ENCODE measurements at regions of chr1 and their contacts with region 1.

Region 1: GRCh38 chr1:25796811-25797458 is 3.1 kb upstream of the SELENON start:
- DNase-seq: peak; percentile 84 to 96 (median 89)
- H3K4me3 ChIP-seq: no peak overlapping the region
- H3K27ac ChIP-seq: peak overlapping the region in 1 of 5 donors; percentile 20
- H3K4me1 ChIP-seq: peaks cover 0 to 20% of the 10 kb centered on the region in 2 donors
- H3K27me3 ChIP-seq: no peaks in the 10 kb centered on the region
- CTCF ChIP-seq: peak; percentile 69 to 91 (median 87)
- POLR2A ChIP-seq: no peak

Region 2: GRCh38 chr1:25590096-25590824 is 206.7 kb before region 1 on chr1:
- intact Hi-C with region 1: no loop called
- DNase-seq: peak in 2 of 7 donors; percentile 22 to 66
- H3K4me3 ChIP-seq: no peak overlapping the region
- H3K27ac ChIP-seq: no peak overlapping the region
- H3K4me1 ChIP-seq: no peaks in the 10 kb centered on the region
- H3K27me3 ChIP-seq: no peaks in the 10 kb centered on the region
- CTCF ChIP-seq: peak in 2 of 6 experiments; percentile 6 to 16
- POLR2A ChIP-seq: no peak

Region 3: DNA sequence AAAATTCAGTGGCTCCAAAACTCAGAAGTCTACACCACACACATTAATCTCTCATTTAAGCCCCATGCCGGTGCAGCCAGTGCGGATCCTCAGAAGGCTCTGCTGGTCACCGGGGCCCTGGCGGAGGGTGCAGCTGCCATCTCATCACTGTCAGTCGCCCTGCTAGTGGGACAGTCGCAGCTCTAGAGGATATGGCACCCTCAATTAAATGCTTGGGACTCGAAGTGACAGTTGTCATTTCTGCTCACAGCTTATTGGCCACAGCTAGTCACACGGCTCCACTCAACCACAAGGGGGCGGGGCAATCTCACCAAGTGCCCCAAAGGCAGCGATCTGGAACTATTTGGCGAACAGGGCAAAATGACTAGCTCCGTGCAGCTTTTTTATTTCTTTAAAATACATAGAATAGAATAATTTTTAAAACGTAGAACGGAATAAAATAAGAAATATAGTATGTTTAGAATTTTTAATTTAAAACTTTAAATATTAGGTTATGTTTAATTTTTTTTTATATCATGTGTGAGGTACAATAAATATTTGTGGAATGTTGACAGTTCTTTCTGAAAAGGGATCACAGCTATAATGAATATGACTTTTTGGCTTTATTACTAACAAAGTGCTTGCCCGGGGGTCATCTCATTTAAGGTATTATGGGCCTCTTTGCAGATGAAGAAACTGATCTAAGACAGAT is 188.3 kb before region 1 on chr1:
- intact Hi-C with region 1: loop called (anchors 2 to 5 kb)
- DNase-seq: peak; percentile 81 to 96 (median 88)
- H3K4me3 ChIP-seq: no peak overlapping the region
- H3K27ac ChIP-seq: no peak overlapping the region
- H3K4me1 ChIP-seq: peaks cover 0 to 13% of the 10 kb centered on the region in 2 donors
- H3K27me3 ChIP-seq: no peaks in the 10 kb centered on the region
- CTCF ChIP-seq: peak; percentile 66 to 76 (median 69)
- POLR2A ChIP-seq: no peak

Region 4: DNA sequence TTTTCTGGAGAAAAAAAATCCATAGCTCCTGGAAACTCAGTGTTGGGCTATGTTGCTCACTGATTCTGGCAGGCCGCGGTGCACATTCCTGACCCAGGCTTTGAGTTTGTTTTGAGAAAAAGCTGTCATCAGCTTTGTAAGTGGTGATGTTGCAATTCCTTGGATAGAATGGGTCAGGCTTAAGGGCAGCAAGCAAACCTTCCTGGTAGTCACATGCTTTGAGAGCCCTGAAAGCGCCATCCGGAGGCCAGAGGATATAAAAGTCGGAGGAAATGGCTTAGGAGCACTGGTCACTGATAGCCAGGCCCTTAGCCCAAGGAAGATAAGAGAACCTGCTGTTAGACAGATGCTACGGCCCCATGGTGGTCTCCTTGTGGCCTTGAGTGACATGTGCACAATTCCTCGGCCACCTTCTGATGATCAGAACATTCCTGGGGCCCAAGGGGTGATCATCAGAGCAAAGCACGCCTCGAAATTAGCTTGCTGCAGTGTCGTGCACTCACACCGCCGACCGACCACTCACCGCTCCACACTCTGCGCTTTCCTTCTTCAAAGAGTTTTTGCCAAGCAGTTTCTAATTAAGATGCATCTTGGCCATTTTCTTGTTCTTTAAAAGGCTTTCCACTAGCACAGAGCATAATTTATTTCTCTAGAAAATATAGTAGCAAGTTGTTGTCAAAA is 101.7 kb before region 1 on chr1:
- intact Hi-C with region 1: loop called in 1 of 2 experiments (anchors 10 kb)
- DNase-seq: peak; percentile 61 to 95 (median 92)
- H3K4me3 ChIP-seq: no peak overlapping the region
- H3K27ac ChIP-seq: peak overlapping the region; percentile 78 to 96 (median 95)
- H3K4me1 ChIP-seq: peaks cover 33 to 69% of the 10 kb centered on the region in 2 donors
- H3K27me3 ChIP-seq: no peaks in the 10 kb centered on the region
- CTCF ChIP-seq: peak in 2 of 6 experiments; percentile 21 to 29
- POLR2A ChIP-seq: peak in 1 of 2 donors; percentile 71